ENCODE measurements at regions of chr14 and their contacts with region 1.

Region 1: GRCh38 chr14:93959239-93960107 is 16.9 kb downstream of the ASB2 start:
- DNase-seq: peak; percentile 98
- H3K4me3 Mint-ChIP-seq: peak overlapping the region; percentile 68
- H3K27ac Mint-ChIP-seq: peak overlapping the region; percentile 99
- H3K4me1 Mint-ChIP-seq: peaks cover 95% of the 10 kb centered on the region
- H3K27me3 Mint-ChIP-seq: no peaks in the 10 kb centered on the region

Region 2: GRCh38 chr14:93317875-93318807 is 641.3 kb before region 1 on chr14:
- CTCF ChIA-PET with region 1: no interaction called
- intact Hi-C with region 1: no loop called
- DNase-seq: no peak
- H3K4me3 Mint-ChIP-seq: no peak overlapping the region
- H3K27ac Mint-ChIP-seq: no peak overlapping the region
- H3K4me1 Mint-ChIP-seq: peaks cover 32% of the 10 kb centered on the region
- H3K27me3 Mint-ChIP-seq: no peaks in the 10 kb centered on the region

Region 3: DNA sequence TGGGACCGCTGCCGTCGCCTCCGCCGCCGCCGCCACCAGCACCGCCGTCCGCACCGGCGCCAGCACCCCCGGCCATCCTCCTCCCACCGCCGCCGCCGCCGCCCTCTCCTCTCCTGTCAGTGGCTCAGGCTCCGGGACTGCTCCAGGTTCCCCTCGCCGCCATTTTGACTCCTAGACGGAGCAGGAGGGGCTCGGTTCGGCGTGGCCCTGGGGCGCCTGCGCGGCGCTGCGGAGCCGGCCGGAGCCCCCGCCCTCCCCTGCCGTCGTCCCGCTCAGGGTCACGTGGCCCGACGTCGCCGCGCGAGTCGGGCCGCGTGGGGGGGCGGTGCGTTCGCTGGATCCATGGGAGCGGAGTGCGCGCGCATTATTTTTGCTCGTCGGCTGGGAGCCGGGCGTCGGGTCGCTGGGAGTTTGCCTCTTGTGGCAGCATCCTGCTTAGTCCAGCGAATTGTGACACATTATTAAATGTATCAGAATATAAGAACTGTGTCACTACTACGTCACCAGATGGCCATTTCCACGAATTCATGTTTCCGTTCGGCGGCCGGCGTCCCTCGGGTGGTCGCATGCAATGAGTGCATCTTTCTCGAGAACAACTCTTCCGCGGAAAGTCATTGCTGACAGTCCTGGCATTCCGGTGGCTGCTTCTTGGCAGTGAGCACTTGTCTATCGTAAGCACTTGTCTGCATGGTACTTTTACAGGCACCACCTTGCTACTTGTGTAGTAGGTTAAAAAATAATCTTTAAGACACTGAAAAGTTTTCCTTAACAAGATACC is 626.4 kb before region 1 on chr14 and contains the start of gene BTBD7:
- CTCF ChIA-PET with region 1: no interaction called
- intact Hi-C with region 1: loop called (anchors 1 kb)
- DNase-seq: peak; percentile 94
- H3K4me3 Mint-ChIP-seq: peak within 1 kb of the TSS; percentile 89
- H3K27ac Mint-ChIP-seq: peak within 1 kb of the TSS; percentile 83
- H3K4me1 Mint-ChIP-seq: peaks cover 49% of the 10 kb centered on the region
- H3K27me3 Mint-ChIP-seq: no peaks in the 10 kb centered on the region
- total RNA-seq, gene BTBD7: 7.2 to 7.7 TPM

Region 4: DNA sequence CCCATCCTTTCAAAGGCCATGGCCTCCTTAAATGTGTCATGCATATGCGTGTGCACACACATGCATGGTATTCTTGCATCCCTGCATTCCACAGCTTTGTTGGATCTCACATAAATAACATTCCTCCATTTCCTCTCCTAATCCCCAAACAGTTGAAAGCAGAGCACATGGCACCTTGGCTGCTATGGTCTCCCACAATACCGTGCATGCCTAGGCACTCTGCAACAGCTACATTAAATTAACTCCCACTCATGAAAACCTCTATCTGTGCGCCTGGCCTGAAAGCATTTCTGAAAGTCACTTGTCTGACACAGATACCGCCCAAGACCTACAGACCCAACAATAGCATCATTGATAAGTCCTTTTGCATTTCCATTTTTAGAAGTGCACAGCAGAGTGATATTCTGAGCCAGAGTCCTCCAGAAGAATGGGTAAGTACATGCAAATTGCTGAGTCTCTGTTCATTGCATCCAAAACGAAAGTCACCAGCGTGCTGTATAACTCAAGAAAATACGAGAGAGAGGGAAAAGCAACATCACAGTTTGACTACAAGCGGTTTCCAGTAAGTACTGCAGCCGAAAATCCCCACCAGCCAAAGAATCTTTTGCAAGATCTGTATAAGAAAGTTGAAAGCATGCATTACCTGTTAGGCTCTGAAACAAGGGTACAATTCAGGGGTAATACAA is 16.5 kb after region 1 on chr14:
- CTCF ChIA-PET with region 1: interaction called, 36 read pairs
- intact Hi-C with region 1: loop called (anchors 1 kb)
- DNase-seq: peak; percentile 65
- H3K4me3 Mint-ChIP-seq: peak overlapping the region; percentile 55
- H3K27ac Mint-ChIP-seq: peak overlapping the region; percentile 95
- H3K4me1 Mint-ChIP-seq: peaks cover 85% of the 10 kb centered on the region
- H3K27me3 Mint-ChIP-seq: no peaks in the 10 kb centered on the region

Region 5: DNA sequence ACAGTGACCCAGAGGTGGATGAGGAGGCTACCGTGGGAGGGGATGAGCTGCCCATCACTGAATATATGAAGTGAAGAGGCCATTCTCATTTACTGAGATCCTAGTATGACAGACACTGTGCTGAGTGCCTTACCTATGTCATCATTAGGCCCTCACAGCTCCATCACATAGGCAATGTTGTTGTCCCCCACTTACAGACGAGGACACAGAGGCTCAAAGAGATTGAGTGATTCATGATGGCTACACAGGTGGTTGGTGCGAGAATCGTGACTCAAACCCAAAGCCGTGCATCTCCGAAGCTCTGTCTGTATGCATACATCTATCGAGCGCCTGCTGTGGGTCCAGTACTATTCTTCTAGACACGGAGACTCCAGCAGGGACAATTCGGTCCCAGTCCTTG is 31.7 kb after region 1 on chr14:
- CTCF ChIA-PET with region 1: no interaction called
- intact Hi-C with region 1: no loop called
- DNase-seq: no peak
- H3K4me3 Mint-ChIP-seq: no peak overlapping the region
- H3K27ac Mint-ChIP-seq: no peak overlapping the region
- H3K4me1 Mint-ChIP-seq: peaks cover 13% of the 10 kb centered on the region
- H3K27me3 Mint-ChIP-seq: no peaks in the 10 kb centered on the region

Region 6: GRCh38 chr14:94161981-94162380 is 202.5 kb after region 1 on chr14:
- CTCF ChIA-PET with region 1: interaction called, 3 read pairs
- intact Hi-C with region 1: loop called (anchors 5 kb)
- DNase-seq: peak; percentile 32
- H3K4me3 Mint-ChIP-seq: no peak overlapping the region
- H3K27ac Mint-ChIP-seq: peak overlapping the region; percentile 38
- H3K4me1 Mint-ChIP-seq: peaks cover 74% of the 10 kb centered on the region
- H3K27me3 Mint-ChIP-seq: peaks cover 2% of the 10 kb centered on the region

Region 7: GRCh38 chr14:94203473-94204210 is 244.2 kb after region 1 on chr14:
- CTCF ChIA-PET with region 1: no interaction called
- intact Hi-C with region 1: no loop called
- DNase-seq: no peak
- H3K4me3 Mint-ChIP-seq: no peak overlapping the region
- H3K27ac Mint-ChIP-seq: no peak overlapping the region
- H3K4me1 Mint-ChIP-seq: peaks cover 3% of the 10 kb centered on the region
- H3K27me3 Mint-ChIP-seq: peaks cover 9% of the 10 kb centered on the region

Region 8: GRCh38 chr14:94373708-94374107 is 414.2 kb after region 1 on chr14:
- CTCF ChIA-PET with region 1: no interaction called
- intact Hi-C with region 1: no loop called
- DNase-seq: no peak
- H3K4me3 Mint-ChIP-seq: no peak overlapping the region
- H3K27ac Mint-ChIP-seq: no peak overlapping the region
- H3K4me1 Mint-ChIP-seq: peaks cover 1% of the 10 kb centered on the region
- H3K27me3 Mint-ChIP-seq: peaks cover 2% of the 10 kb centered on the region

Region 9: GRCh38 chr14:95515596-95516552 is 1556.4 kb after region 1 on chr14:
- CTCF ChIA-PET with region 1: no interaction called
- intact Hi-C with region 1: loop called (anchors 5 kb)
- DNase-seq: peak; percentile 93
- H3K4me3 Mint-ChIP-seq: peak overlapping the region; percentile 80
- H3K27ac Mint-ChIP-seq: peak overlapping the region; percentile 79
- H3K4me1 Mint-ChIP-seq: peaks cover 61% of the 10 kb centered on the region
- H3K27me3 Mint-ChIP-seq: no peaks in the 10 kb centered on the region